Aorta (tissue), 5 donors: ENCODE measurements at regions of chr1 and their contacts with region 1.

Region 1: GRCh38 chr1:10209905-10210810 is at the start of gene KIF1B:
- DNase-seq: peak; percentile 99
- ATAC-seq: peak; percentile 99
- H3K4me3 ChIP-seq: peak within 1 kb of the TSS; percentile 84 to 97
- H3K27ac ChIP-seq: peak within 1 kb of the TSS; percentile 99 to 100
- H3K4me1 ChIP-seq: no peaks in the 10 kb centered on the region
- H3K27me3 ChIP-seq: no peaks in the 10 kb centered on the region
- total RNA-seq, gene KIF1B: 60.0 to 67.6 TPM

Region 2: GRCh38 chr1:10143961-10144485 is 66.1 kb before region 1 on chr1:
- intact Hi-C with region 1: no loop called
- DNase-seq: no peak
- ATAC-seq: no peak
- H3K4me3 ChIP-seq: no peak overlapping the region
- H3K27ac ChIP-seq: no peak overlapping the region
- H3K4me1 ChIP-seq: no peaks in the 10 kb centered on the region
- H3K27me3 ChIP-seq: no peaks in the 10 kb centered on the region

Region 3: DNA sequence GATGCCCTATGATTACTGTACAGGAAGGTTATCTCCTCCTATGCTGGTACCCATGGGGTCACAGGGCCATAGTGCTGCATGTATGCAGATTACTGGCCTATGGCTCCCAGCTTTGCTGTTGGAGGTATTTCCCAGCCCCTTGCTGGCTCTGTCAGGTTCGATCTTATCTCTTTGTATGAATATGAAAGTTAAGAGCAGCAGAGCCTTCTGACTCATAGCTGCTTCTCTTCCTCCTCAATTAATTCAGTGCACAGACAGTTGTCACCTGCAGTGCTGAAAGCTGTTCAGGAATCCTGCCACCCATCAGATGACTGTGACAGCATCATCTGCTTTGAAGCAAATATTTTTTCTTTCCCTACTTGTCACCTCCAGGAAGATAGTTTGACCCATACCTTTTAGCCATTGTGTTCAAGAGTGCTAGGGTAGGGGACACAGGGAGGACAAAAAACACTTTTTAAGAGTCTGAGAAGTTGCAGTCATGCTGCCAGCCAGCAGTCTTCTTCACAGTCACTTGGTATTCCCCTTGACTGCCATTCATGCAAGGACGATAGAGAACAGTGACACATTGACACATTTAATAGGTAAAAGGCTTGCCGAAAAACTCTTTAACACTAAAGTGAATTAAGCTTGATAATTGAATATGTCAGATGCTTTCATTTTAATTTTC is 73.3 kb after region 1 on chr1:
- intact Hi-C with region 1: loop called (anchors 2 to 10 kb)
- DNase-seq: no peak
- ATAC-seq: no peak
- H3K4me3 ChIP-seq: no peak overlapping the region
- H3K27ac ChIP-seq: no peak overlapping the region
- H3K4me1 ChIP-seq: peaks cover 8% of the 10 kb centered on the region in 2 donors
- H3K27me3 ChIP-seq: no peaks in the 10 kb centered on the region

Region 4: GRCh38 chr1:10338047-10338446 is 127.9 kb after region 1 on chr1:
- intact Hi-C with region 1: loop called in 1 of 2 experiments (anchors 1 kb)
- DNase-seq: no peak
- ATAC-seq: peak; percentile 63
- H3K4me3 ChIP-seq: no peak overlapping the region
- H3K27ac ChIP-seq: no peak overlapping the region
- H3K4me1 ChIP-seq: no peaks in the 10 kb centered on the region
- H3K27me3 ChIP-seq: no peaks in the 10 kb centered on the region